ENCODE measurements at regions of chr11 and their contacts with region 1.

Region 1: GRCh38 chr11:6362873-6363678 is 27.2 kb upstream of the SMPD1 start:
- DNase-seq: peak; percentile 83 to 90
- ATAC-seq: peak; percentile 88 to 94 (median 91)
- H3K4me3 ChIP-seq: peak overlapping the region; percentile 18
- H3K27ac ChIP-seq: peak overlapping the region; percentile 91
- H3K4me1 ChIP-seq: peaks cover 12% of the 10 kb centered on the region
- H3K27me3 ChIP-seq: no peaks in the 10 kb centered on the region
- CTCF ChIP-seq: peak; percentile 86

Region 2: DNA sequence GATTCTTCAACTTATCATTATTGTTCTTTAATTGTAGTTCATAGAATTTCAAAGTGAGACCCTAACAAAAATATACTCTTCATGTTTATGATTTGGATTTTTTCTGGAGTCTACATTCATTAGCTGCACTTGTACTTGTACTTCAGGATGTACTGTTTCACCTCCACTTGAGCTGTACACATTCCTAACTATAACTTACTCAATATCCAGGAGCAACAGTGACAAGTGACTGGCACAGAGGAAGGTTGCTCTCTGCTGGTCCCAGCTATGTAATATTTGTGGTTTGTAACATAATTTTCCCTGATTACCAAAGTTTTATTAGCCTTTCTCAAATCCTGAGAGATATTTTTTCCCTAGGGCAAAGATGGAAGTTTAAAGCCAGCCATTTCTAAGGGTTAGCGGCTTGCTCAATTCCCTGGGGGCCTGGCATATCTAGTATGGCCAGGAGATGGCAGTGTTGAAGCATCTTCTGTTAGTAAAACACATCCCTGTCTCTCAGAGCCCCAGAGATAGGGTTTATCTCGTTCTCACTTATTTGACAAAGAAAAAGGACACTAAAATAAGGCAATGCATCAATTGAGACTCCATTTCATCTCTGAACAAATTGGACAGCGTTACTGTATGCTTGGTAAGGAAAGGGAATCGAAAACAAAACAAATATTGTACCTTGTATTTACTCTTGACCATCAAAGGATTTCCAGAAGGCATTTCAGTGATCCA is 1239.1 kb before region 1 on chr11:
- intact Hi-C with region 1: loop called in 1 of 2 experiments (anchors 10 kb)
- DNase-seq: peak; percentile 26 to 60
- ATAC-seq: peak; percentile 58 to 76 (median 70)
- H3K4me3 ChIP-seq: no peak overlapping the region
- H3K27ac ChIP-seq: no peak overlapping the region
- H3K4me1 ChIP-seq: no peaks in the 10 kb centered on the region
- H3K27me3 ChIP-seq: no peaks in the 10 kb centered on the region
- CTCF ChIP-seq: peak; percentile 74

Region 3: GRCh38 chr11:6298605-6299004 is 64.5 kb before region 1 on chr11:
- intact Hi-C with region 1: loop called in 1 of 2 experiments (anchors 5 kb)
- DNase-seq: peak; percentile 27 to 64
- ATAC-seq: peak; percentile 76 to 94 (median 85)
- H3K4me3 ChIP-seq: no peak overlapping the region
- H3K27ac ChIP-seq: no peak overlapping the region
- H3K4me1 ChIP-seq: no peaks in the 10 kb centered on the region
- H3K27me3 ChIP-seq: no peaks in the 10 kb centered on the region
- CTCF ChIP-seq: peak; percentile 57

Region 4: DNA sequence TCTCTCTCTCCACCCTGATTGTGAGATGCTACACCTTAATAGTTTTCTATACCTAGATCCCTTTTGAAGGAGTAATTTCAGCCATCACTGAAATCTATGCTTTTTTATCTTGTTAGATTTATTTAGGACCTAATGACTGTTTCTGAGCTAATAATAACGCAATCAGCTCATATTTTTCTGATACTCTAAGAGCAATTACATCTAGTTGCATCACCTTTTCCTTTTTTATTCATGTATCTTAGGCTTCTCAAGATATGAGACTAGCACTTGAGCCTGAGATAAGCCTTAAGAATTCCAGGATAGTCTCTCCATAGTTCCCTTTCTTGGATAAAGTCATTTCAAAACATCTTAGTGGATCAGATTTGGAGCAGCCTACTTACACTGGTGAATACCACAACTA is 17.7 kb before region 1 on chr11:
- intact Hi-C with region 1: no loop called
- DNase-seq: no peak
- ATAC-seq: no peak
- H3K4me3 ChIP-seq: no peak overlapping the region
- H3K27ac ChIP-seq: no peak overlapping the region
- H3K4me1 ChIP-seq: no peaks in the 10 kb centered on the region
- H3K27me3 ChIP-seq: no peaks in the 10 kb centered on the region
- CTCF ChIP-seq: no peak

Region 5: DNA sequence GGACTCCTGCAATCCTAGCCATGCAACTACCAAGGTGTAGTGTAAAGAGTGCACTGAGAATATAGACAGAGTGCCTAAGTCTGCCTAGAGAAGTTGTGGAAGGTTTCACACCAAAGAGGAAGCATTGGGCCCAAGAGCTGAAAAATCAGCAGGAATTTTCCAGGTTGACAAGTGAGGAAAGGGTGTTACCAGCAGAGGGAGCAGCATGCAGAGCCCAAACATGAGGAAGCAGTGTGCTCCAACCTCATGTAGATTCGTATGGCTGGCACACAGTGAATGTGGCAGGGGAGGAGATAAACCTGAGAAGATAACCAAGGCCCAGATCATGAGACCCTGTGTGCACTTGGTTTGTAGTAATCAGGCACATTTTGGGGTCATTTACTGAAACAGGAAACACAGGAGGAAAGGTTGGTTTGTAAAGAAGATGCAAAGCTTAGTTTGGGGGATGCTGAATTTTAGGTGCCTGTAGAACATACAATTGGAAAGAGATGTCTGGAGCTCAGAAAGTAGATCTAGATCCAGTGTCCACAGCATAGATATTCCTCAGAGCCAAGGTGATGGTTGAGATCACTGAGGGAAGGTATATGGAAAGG is 76.0 kb after region 1 on chr11:
- intact Hi-C with region 1: no loop called
- DNase-seq: no peak
- ATAC-seq: peak; percentile 73 to 78 (median 74)
- H3K4me3 ChIP-seq: no peak overlapping the region
- H3K27ac ChIP-seq: no peak overlapping the region
- H3K4me1 ChIP-seq: no peaks in the 10 kb centered on the region
- H3K27me3 ChIP-seq: no peaks in the 10 kb centered on the region
- CTCF ChIP-seq: peak; percentile 65

Region 6: GRCh38 chr11:6619004-6619745 is 256.1 kb after region 1 on chr11 and contains the start of gene TPP1:
- intact Hi-C with region 1: no loop called
- DNase-seq: peak; percentile 87 to 92
- ATAC-seq: peak; percentile 97 to 99 (median 98)
- H3K4me3 ChIP-seq: peak within 1 kb of the TSS; percentile 80
- H3K27ac ChIP-seq: peak within 1 kb of the TSS; percentile 89
- H3K4me1 ChIP-seq: peaks cover 21% of the 10 kb centered on the region
- H3K27me3 ChIP-seq: no peaks in the 10 kb centered on the region
- CTCF ChIP-seq: no peak
- total RNA-seq, gene TPP1: 28.0 to 50.2 (median 35.8) TPM

Measured in psoas muscle (tissue), 8 donors.